Activated naive CD4-positive, alpha-beta T cell treated with anti-CD3 and anti-CD28 coated beads, Interleukin-2, amount 10 ng/mL, durations not matched to agents 7 days and 5 days (primary cell): ENCODE measurements at regions of chr15 and their contacts with region 1.

Region 1: DNA sequence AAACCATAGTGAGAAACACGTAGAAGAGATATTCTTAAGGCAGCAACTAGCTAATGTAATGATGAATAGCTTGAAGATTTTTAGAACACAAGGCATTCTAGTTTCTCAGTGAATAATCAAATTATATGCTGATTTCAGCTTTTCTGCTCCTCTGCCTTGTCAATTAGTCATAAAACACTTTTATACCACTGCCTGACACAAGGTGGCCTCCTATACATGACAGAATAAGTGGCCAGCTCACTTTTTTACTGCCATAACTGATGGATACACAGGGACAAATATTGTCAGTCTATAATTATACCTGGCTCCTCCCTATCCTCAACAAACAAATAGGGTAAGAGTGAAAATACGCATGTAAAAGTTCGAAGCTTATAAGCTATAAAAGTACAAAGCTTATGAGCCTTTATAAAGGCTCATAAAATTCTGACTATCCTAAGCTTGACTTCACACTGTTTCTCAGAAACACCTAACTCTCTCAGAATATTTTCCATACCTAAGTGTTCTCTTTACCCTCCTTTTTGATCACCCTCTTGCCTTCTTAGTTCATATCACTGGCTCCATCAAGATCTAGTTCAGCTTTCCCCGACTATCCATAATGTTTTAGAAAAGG is 81.6 kb downstream of the HERC1 start:
- DNase-seq: peak; percentile 59
- H3K4me3 Mint-ChIP-seq: no peak overlapping the region
- H3K27ac Mint-ChIP-seq: no peak overlapping the region
- H3K4me1 Mint-ChIP-seq: no peaks in the 10 kb centered on the region
- H3K27me3 Mint-ChIP-seq: no peaks in the 10 kb centered on the region

Region 2: DNA sequence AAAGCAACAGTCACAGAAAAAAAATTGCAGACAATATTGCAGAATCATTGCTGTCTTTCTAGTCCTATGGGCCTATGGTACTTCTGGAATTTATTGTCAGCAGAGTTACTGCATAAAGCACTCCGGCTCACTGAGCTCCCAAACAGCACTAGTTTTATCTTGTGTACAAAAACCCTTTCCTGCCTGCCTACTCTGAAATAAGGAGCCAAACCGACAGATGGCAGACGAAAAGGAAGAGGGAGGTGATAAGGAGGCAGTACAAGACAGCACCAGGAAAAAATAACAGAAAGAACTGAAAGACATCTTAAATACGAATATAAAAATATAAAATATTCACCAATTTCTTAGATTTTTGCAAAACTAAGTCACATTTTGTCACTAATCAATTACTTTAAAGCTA is 66.0 kb after region 1 on chr15:
- CTCF ChIA-PET with region 1: interaction called, 10 read pairs
- DNase-seq: no peak
- H3K4me3 Mint-ChIP-seq: no peak overlapping the region
- H3K27ac Mint-ChIP-seq: no peak overlapping the region
- H3K4me1 Mint-ChIP-seq: peaks cover 44% of the 10 kb centered on the region
- H3K27me3 Mint-ChIP-seq: no peaks in the 10 kb centered on the region

Region 3: GRCh38 chr15:63839722-63840121 is 87.5 kb after region 1 on chr15:
- CTCF ChIA-PET with region 1: no interaction called
- DNase-seq: no peak
- H3K4me3 Mint-ChIP-seq: no peak overlapping the region
- H3K27ac Mint-ChIP-seq: no peak overlapping the region
- H3K4me1 Mint-ChIP-seq: peaks cover 21% of the 10 kb centered on the region
- H3K27me3 Mint-ChIP-seq: peaks cover 20% of the 10 kb centered on the region

Region 4: DNA sequence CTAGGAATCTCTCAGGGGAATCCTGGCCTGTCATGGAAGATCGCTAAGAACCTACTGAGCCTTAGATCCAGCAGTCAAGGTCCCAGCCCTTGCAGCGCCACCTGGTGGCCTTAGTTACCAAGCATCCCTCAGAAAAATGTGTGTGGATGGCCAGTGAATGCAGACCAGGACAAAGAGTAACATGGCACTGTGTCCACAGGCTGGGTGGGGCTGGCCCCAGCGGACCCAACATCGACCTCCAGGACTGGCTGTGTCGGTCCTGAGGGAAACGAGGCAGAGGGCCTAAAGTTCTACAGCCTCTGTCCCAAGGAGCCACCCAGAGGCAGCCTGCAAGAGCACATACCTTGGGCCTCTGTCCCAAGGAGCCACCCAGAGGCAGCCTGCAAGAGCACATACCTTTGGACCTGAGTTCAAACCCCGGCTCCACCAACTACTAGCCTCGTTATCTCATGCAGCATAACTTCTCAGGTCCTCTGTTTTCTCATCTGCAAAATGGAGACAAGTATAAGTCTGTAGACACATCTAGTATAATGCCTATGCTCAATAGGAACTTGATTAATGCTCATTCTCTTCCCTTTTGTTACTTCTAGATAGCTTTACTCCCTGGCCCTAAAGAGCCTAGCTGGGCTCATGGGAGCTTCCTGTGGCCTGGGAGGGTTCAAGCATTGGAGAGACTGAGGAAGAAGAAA is 139.0 kb after region 1 on chr15:
- CTCF ChIA-PET with region 1: interaction called, 28 read pairs
- DNase-seq: peak; percentile 80
- H3K4me3 Mint-ChIP-seq: no peak overlapping the region
- H3K27ac Mint-ChIP-seq: peak overlapping the region; percentile 90
- H3K4me1 Mint-ChIP-seq: peaks cover 54% of the 10 kb centered on the region
- H3K27me3 Mint-ChIP-seq: no peaks in the 10 kb centered on the region

Region 5: GRCh38 chr15:64010719-64011118 is 258.5 kb after region 1 on chr15:
- CTCF ChIA-PET with region 1: interaction called, 32 read pairs
- DNase-seq: peak; percentile 92
- H3K4me3 Mint-ChIP-seq: peak overlapping the region; percentile 18
- H3K27ac Mint-ChIP-seq: peak overlapping the region; percentile 91
- H3K4me1 Mint-ChIP-seq: peaks cover 41% of the 10 kb centered on the region
- H3K27me3 Mint-ChIP-seq: peaks cover 4% of the 10 kb centered on the region

Region 6: GRCh38 chr15:64067564-64068030 is 315.4 kb after region 1 on chr15:
- CTCF ChIA-PET with region 1: interaction called, 72 read pairs
- DNase-seq: peak; percentile 78
- H3K4me3 Mint-ChIP-seq: no peak overlapping the region
- H3K27ac Mint-ChIP-seq: no peak overlapping the region
- H3K4me1 Mint-ChIP-seq: peaks cover 15% of the 10 kb centered on the region
- H3K27me3 Mint-ChIP-seq: no peaks in the 10 kb centered on the region

Region 7: GRCh38 chr15:64187396-64188191 is 435.4 kb after region 1 on chr15:
- CTCF ChIA-PET with region 1: no interaction called
- DNase-seq: no peak
- H3K4me3 Mint-ChIP-seq: no peak overlapping the region
- H3K27ac Mint-ChIP-seq: peak overlapping the region; percentile 75
- H3K4me1 Mint-ChIP-seq: peaks cover 3% of the 10 kb centered on the region
- H3K27me3 Mint-ChIP-seq: no peaks in the 10 kb centered on the region